ENCODE measurements at regions of chr9 and their contacts with region 1.

Region 1: GRCh38 chr9:22446950-22447617 is 460 bp downstream of the DMRTA1 start:
- DNase-seq: peak; percentile 56 to 60
- H3K4me3 ChIP-seq: peak overlapping the region; percentile 68
- H3K27ac ChIP-seq: no peak overlapping the region
- H3K4me1 ChIP-seq: peaks cover 17% of the 10 kb centered on the region; the same call in 1 of the 2 replicates
- H3K27me3 ChIP-seq: no peaks in the 10 kb centered on the region
- CTCF ChIP-seq: no peak; the same call in 1 of the 2 replicates

Region 2: DNA sequence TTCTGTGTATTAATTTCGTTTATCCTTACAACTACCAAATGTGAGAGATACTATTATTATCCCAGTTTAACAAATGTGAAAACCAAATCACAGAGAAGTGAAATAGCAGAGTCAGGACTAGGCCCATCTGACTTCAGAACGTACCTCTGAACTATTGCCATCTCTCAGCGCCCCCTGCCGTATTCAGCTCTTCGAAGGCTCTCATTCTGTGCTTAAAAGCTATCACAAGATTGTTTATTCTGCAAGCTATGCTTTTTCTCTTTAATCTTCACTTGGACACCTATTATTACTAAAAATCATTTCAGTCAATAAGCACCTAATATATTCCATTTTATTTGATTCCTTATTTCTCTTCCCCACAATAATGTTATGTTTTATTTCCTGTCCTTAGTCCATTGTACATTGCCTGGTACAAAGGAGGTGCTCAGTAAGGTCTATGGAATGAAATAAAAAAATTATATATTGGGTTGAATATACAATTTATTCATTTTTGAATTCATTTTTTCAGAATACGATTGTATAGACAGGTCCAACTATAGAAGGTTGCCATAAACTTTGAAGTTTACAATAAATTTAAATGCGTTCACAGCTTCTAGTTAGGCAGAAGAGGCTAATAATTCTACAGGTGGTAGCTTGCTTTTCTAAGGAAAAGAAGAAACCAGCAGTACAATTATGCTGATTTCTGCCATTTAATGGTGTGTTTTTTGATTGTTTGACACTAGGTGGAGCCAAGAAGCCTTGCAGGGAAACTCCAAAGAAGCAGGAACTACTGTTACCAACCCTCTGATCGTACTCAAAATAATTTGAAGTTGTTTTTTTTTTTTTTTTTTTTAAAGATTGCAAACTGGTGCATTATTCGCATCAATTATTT is 202.7 kb before region 1 on chr9:
- CTCF ChIA-PET with region 1: no interaction called
- POLR2A ChIA-PET with region 1: no interaction called
- intact Hi-C with region 1: loop called (anchors 2 kb)
- DNase-seq: peak in 1 of 2 experiments; percentile 49
- H3K4me3 ChIP-seq: no peak overlapping the region
- H3K27ac ChIP-seq: no peak overlapping the region
- H3K4me1 ChIP-seq: peaks cover 31% of the 10 kb centered on the region
- H3K27me3 ChIP-seq: no peaks in the 10 kb centered on the region
- CTCF ChIP-seq: peak; percentile 14

Region 3: GRCh38 chr9:22332202-22332601 is 114.9 kb before region 1 on chr9:
- CTCF ChIA-PET with region 1: no interaction called
- POLR2A ChIA-PET with region 1: no interaction called
- intact Hi-C with region 1: no loop called
- DNase-seq: no peak
- H3K4me3 ChIP-seq: no peak overlapping the region
- H3K27ac ChIP-seq: no peak overlapping the region
- H3K4me1 ChIP-seq: no peaks in the 10 kb centered on the region
- H3K27me3 ChIP-seq: no peaks in the 10 kb centered on the region
- CTCF ChIP-seq: no peak

Region 4: GRCh38 chr9:22363421-22363887 is 83.6 kb before region 1 on chr9:
- CTCF ChIA-PET with region 1: no interaction called
- POLR2A ChIA-PET with region 1: no interaction called
- intact Hi-C with region 1: no loop called
- DNase-seq: no peak
- H3K4me3 ChIP-seq: no peak overlapping the region
- H3K27ac ChIP-seq: no peak overlapping the region
- H3K4me1 ChIP-seq: no peaks in the 10 kb centered on the region
- H3K27me3 ChIP-seq: no peaks in the 10 kb centered on the region
- CTCF ChIP-seq: no peak

Region 5: GRCh38 chr9:22425551-22425950 is 21.5 kb before region 1 on chr9:
- CTCF ChIA-PET with region 1: no interaction called
- POLR2A ChIA-PET with region 1: interaction called, 13 read pairs
- intact Hi-C with region 1: no loop called
- DNase-seq: no peak
- H3K4me3 ChIP-seq: no peak overlapping the region
- H3K27ac ChIP-seq: no peak overlapping the region
- H3K4me1 ChIP-seq: no peaks in the 10 kb centered on the region
- H3K27me3 ChIP-seq: no peaks in the 10 kb centered on the region
- CTCF ChIP-seq: no peak

Region 6: DNA sequence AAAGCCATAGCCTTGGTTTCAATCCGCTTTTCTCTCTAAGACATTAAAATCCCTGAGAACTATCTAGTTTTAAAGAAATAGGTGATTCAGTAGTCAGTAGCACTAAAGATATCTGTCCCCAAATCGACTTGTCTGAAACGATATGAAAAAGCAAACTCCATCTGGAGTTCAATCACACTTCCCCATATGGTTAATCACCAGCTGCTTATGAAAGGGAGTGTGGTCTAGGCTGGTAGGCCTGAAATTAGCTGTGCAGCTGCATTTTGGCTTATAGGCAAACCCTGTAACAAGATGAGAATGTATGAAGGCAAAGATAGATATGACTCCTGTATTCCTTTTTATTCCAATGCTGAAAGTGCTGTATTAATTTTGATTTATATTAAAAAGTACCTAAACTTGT is 65.4 kb after region 1 on chr9:
- CTCF ChIA-PET with region 1: no interaction called
- POLR2A ChIA-PET with region 1: no interaction called
- intact Hi-C with region 1: no loop called
- DNase-seq: no peak
- H3K4me3 ChIP-seq: no peak overlapping the region
- H3K27ac ChIP-seq: no peak overlapping the region
- H3K4me1 ChIP-seq: no peaks in the 10 kb centered on the region
- H3K27me3 ChIP-seq: no peaks in the 10 kb centered on the region
- CTCF ChIP-seq: no peak

Measured in PC-9 (cell line).